ENCODE measurements at regions of chr2 and their contacts with region 1.

Region 1: DNA sequence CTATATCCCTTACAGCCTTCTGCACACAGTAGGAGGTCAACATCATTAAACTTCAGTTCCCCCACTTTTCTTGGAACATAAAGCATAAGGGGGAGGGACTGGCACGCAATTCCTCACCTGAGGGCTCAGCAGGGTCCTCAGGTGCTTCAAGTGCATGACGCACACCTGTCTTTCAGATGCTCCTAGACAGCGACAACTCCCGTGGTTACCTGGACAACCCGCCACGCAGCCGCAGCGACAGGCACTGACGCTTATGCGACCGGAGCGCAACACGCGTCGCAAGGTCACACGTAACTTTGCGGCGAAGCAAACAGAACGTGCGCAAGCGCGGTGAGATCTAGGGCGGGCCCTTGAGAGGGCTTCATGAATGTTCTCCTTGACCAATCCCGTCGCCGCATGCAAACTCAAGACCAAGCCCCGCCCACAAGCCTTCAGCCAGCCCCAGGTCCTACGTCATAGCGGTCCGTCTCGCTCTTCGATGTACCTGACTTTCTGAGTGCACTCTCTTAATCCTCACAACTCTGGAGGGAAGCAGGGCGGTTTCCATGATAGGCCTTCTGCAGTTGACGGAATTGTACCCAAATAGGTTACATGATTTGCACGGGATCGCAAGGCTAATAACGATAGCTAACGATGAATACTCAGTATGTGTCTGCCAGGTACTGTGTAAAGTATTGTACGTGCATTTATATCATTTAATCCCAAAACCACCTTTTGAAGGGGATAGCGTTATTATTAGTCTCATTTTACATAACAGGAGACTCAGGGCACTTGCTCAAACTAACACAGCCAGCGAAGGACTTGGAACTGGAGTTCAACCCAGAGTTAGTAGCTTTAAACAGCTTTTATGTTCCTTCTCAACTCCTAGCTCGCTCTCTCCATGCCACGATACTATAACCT is at the start of gene IFT172:
- DNase-seq: peak; percentile 99
- ATAC-seq: peak; percentile 99
- H3K4me3 ChIP-seq: peak within 1 kb of the TSS; percentile 69 to 83 (median 77)
- H3K27ac ChIP-seq: peak within 1 kb of the TSS; percentile 75 to 85 (median 83)
- H3K4me1 ChIP-seq: peaks cover 13 to 25% of the 10 kb centered on the region in 2 donors
- H3K27me3 ChIP-seq: peaks cover 0 to 7% (median 0%) of the 10 kb centered on the region in 3 donors
- CTCF ChIP-seq: no peak
- POLR2A ChIP-seq: peak; percentile 48 to 76
- total RNA-seq, gene IFT172: 3.1 to 16.8 (median 8.6) TPM

Region 2: GRCh38 chr2:27356382-27357181 is 133.2 kb before region 1 on chr2 and contains the start of gene GTF3C2:
- in situ Hi-C with region 1: no loop called
- intact Hi-C with region 1: loop called (anchors 5 kb)
- DNase-seq: peak; percentile 90 to 95
- ATAC-seq: peak; percentile 82 to 88
- H3K4me3 ChIP-seq: peak within 1 kb of the TSS; percentile 69 to 98 (median 93)
- H3K27ac ChIP-seq: peak within 1 kb of the TSS; percentile 92 to 99 (median 94)
- H3K4me1 ChIP-seq: peaks cover 42 to 50% of the 10 kb centered on the region in 2 donors
- H3K27me3 ChIP-seq: no peaks in the 10 kb centered on the region
- CTCF ChIP-seq: peak in 2 of 5 experiments; percentile 26 to 46
- POLR2A ChIP-seq: peak; percentile 50
- total RNA-seq, gene GTF3C2: 25.3 to 45.6 (median 40.5) TPM

Region 3: DNA sequence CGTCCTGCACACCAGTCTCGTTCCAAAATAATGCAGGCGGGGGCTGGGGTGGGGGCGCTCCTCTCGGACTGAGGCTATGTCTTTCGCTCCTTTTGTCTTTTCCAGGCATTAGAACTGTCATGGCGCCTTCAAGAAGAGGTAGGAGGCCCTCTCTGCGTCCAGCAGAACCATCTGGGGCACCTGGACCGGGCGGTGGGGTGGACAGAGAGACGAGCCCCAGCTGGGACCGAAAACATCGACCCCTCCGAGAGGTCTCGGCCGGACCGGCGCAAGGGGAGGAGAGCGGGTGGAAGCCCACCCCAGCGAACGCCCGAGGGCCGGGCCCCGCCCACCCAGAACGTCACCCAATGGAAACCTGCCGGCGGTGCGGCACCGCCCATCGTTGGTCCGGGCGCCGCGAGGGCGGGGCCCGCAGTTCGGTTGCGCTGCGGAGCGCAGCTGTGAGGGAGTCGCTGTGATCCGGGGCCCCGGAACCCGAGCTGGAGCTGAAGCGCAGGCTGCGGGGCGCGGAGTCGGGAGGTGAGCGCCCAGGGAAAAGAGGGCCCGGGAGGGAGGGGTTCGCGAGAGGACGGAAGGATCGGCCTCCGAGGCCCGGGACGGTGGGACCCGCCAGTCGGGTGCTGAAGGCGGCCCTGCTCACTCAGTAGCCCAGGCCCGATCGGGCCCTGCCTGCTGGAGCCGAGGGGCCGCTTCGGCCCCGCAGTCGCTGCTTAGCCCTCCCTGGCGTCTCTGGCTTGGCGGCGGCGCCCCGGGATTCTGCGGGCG is 61.4 kb before region 1 on chr2 and contains the start of gene NRBP1:
- in situ Hi-C with region 1: no loop called
- intact Hi-C with region 1: loop called (anchors 1 kb)
- DNase-seq: peak; percentile 87 to 89
- ATAC-seq: peak; percentile 88 to 89
- H3K4me3 ChIP-seq: peak within 1 kb of the TSS; percentile 81 to 100 (median 98)
- H3K27ac ChIP-seq: peak within 1 kb of the TSS; percentile 93 to 100 (median 100)
- H3K4me1 ChIP-seq: peaks cover 34 to 43% of the 10 kb centered on the region in 2 donors
- H3K27me3 ChIP-seq: no peaks in the 10 kb centered on the region
- CTCF ChIP-seq: no peak
- POLR2A ChIP-seq: peak; percentile 94 to 97
- total RNA-seq, gene NRBP1: 91.8 to 125 (median 120) TPM

Region 4: DNA sequence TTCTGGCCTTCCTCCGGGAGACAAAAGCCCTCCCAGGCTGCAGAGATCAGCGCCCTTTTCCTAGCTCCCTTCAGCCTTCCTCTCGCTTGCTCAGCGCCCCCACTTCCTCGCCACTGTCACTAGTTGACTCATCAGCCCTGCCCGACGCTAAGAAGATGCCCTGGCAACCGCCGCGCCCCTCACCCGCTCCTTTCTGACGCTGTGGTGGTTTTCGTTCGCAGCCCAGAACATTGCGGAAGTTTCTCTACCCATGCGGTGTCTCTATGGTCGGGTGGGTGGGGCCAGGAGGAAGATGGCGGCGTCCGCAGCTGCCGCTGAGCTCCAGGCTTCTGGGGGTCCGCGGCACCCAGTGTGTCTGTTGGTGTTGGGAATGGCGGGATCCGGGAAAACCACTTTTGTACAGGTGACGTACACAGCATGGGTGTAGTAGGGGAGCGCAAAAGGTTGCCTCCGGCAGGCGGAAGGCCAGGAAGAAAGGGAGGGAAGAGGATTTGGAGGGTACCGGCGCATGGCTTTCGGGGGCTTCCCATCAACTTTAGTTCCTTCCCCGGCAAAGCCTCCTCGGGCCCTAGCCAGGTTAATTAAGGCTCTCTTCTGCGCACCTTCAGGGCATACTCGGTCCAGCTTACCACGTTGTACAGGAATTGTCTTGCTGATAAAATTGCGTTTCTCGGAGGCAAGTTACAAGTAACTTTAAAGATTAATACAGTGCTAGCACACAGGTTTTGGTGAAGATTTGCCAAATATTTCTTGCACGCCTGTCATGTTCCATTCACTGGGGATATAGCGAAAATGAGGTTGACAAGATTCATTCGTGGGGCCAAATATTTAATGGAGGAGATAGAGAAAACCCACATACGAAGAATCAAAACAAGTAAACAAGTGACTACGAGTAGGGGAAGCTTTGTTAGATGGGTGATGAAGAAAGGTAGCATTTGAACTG is 139.3 kb after region 1 on chr2 and contains the starts of genes CCDC121 and GPN1:
- in situ Hi-C with region 1: no loop called
- intact Hi-C with region 1: loop called (anchors 5 kb)
- DNase-seq: peak; percentile 72 to 80
- ATAC-seq: peak; percentile 93 to 94
- H3K4me3 ChIP-seq: peak within 1 kb of the TSS; percentile 67 to 90 (median 87)
- H3K27ac ChIP-seq: peak within 1 kb of the TSS; percentile 77 to 84 (median 81)
- H3K4me1 ChIP-seq: peaks cover 17 to 27% of the 10 kb centered on the region in 2 donors
- H3K27me3 ChIP-seq: no peaks in the 10 kb centered on the region
- CTCF ChIP-seq: no peak
- POLR2A ChIP-seq: peak; percentile 49 to 50
- total RNA-seq, gene CCDC121: 0.56 to 2.0 (median 1.3) TPM
- total RNA-seq, gene GPN1: 21.0 to 30.0 (median 25.0) TPM

Region 5: GRCh38 chr2:27647289-27647688 is 157.5 kb after region 1 on chr2:
- in situ Hi-C with region 1: no loop called
- intact Hi-C with region 1: no loop called
- DNase-seq: no peak
- ATAC-seq: no peak
- H3K4me3 ChIP-seq: no peak overlapping the region
- H3K27ac ChIP-seq: no peak overlapping the region
- H3K4me1 ChIP-seq: no peaks in the 10 kb centered on the region
- H3K27me3 ChIP-seq: no peaks in the 10 kb centered on the region
- CTCF ChIP-seq: no peak
- POLR2A ChIP-seq: no peak

Measured in gastrocnemius medialis (tissue), 4 donors.